ENCODE measurements at regions of chr1 and their contacts with region 1.

Region 1: GRCh38 chr1:202998836-202999750 is 8.1 kb upstream of the TMEM183A start:
- DNase-seq: peak; percentile 41
- ATAC-seq: peak; percentile 66
- H3K4me3 ChIP-seq: no peak overlapping the region
- H3K27ac ChIP-seq: no peak overlapping the region
- H3K4me1 ChIP-seq: no peaks in the 10 kb centered on the region
- H3K27me3 ChIP-seq: peaks cover 14% of the 10 kb centered on the region
- CTCF ChIP-seq: peak; percentile 86

Region 2: DNA sequence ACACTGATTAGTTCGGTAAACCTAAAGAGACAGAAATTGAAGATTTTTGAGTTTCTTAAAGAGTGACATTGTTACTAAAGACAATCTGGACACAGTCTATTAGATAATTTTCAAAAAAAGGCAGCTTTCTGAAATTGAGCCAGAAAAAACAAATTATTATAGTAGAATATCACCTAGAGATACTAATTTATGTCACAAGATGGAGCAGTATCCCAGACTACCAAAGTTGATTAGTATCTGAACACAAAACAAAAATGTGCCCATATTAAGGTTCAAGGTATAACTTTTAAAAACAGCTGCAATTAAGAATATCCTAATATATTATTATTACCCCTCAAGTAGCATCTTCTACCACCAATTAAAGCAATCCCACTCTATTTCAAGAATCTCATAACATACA is 248.3 kb before region 1 on chr1:
- CTCF ChIA-PET with region 1: no interaction called
- POLR2A ChIA-PET with region 1: no interaction called
- in situ Hi-C with region 1: no loop called
- intact Hi-C with region 1: loop called (anchors 10 kb)
- DNase-seq: no peak
- ATAC-seq: no peak
- H3K4me3 ChIP-seq: no peak overlapping the region
- H3K27ac ChIP-seq: no peak overlapping the region
- H3K4me1 ChIP-seq: no peaks in the 10 kb centered on the region
- H3K27me3 ChIP-seq: no peaks in the 10 kb centered on the region
- CTCF ChIP-seq: no peak

Region 3: DNA sequence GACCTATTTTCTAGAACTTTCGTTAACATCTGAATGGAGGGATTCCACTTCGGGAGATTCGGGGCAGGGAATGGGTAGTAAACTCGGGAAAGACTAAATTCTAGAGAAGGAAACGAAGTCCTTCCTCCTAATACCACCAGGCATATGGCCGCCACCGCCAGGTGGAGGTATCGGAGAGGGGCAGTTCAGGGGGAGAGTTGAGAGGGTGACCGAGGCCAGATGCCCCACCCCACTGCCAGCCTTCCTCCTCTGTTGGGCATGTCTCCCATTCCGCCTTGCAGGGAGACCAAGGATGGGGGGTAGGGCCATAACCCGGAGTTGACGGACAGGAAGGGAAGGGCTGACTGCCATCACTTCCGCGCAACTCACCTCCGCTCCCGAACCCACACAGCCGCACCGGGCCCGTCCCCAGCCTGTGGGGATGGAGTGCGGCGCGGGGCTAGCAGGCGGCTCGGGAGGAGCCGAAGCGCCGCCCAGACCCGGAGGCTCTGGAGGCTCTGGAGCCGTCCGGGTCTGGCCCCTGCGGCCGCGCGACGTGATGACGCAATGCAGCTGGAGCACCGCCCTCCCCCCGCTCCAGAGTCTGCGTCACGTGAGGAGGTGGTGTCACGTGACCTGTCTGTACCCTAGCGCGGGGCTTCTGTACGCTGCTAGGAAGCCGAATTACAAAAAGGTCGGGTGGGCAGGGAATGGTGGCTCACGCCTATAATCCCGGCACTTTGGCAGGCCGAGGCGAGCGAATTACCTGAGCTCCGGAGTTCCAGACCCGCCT is 72.2 kb before region 1 on chr1 and contains the start of gene KLHL12:
- CTCF ChIA-PET with region 1: interaction called, 3 read pairs
- POLR2A ChIA-PET with region 1: no interaction called
- in situ Hi-C with region 1: no loop called
- intact Hi-C with region 1: loop called (anchors 5 kb)
- DNase-seq: peak; percentile 85
- ATAC-seq: peak; percentile 99
- H3K4me3 ChIP-seq: peak within 1 kb of the TSS; percentile 81 to 98
- H3K27ac ChIP-seq: peak within 1 kb of the TSS; percentile 97
- H3K4me1 ChIP-seq: peaks cover 6% of the 10 kb centered on the region; the same call in 1 of the 2 replicates
- H3K27me3 ChIP-seq: no peaks in the 10 kb centered on the region
- CTCF ChIP-seq: peak; percentile 73
- total RNA-seq, gene KLHL12: 37.8 TPM

Region 4: DNA sequence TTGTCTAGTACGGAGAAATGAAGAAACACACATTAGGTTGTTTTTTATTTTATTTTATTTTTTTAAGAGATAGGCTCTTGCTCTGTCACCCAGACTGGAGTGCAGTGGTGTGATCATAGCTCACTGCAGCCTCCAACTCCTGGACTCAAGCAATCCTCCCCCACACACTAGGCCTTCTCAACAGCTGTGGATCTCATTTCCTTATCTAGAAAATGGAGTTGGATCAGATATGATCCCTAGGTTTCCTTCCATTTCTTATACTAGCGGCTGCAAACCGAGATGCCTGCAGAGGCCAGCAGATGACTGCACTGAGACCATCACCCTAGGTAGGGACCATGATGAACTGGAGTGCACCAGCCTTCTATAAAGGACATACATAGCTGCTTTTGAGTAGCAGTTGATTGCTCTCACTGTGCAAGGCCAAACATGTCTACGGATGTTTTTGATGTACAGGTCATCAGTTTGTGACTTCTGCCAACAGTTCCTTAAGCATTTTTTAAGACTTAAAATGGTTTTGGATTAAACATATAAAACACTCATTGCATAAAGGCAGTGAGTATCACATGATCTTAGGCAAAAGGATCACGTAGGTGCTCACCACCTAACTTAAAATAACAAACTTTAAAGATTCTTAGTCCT is 60.7 kb before region 1 on chr1:
- CTCF ChIA-PET with region 1: no interaction called
- POLR2A ChIA-PET with region 1: no interaction called
- in situ Hi-C with region 1: no loop called
- intact Hi-C with region 1: no loop called
- DNase-seq: no peak
- ATAC-seq: no peak; the same call in 1 of the 2 replicates
- H3K4me3 ChIP-seq: no peak overlapping the region
- H3K27ac ChIP-seq: no peak overlapping the region
- H3K4me1 ChIP-seq: no peaks in the 10 kb centered on the region
- H3K27me3 ChIP-seq: no peaks in the 10 kb centered on the region; the same call in 1 of the 2 replicates
- CTCF ChIP-seq: no peak

Region 5: GRCh38 chr1:202982715-202983430 is 16.2 kb before region 1 on chr1:
- CTCF ChIA-PET with region 1: interaction called, 13 read pairs
- POLR2A ChIA-PET with region 1: no interaction called
- in situ Hi-C with region 1: no loop called
- intact Hi-C with region 1: no loop called
- DNase-seq: no peak
- ATAC-seq: no peak
- H3K4me3 ChIP-seq: no peak overlapping the region
- H3K27ac ChIP-seq: no peak overlapping the region
- H3K4me1 ChIP-seq: no peaks in the 10 kb centered on the region
- H3K27me3 ChIP-seq: 0 out of 2 replicates have a peak, but pooled peaks cover 3% of the 10 kb centered on the region
- CTCF ChIP-seq: no peak

Measured in Panc1 (cell line).